ENCODE measurements at regions of chr2 and their contacts with region 1.

Region 1: GRCh38 chr2:171598713-171599319 is 76.5 kb downstream of the CYBRD1 start:
- DNase-seq: no peak
- ATAC-seq: peak; percentile 74

Region 2: DNA sequence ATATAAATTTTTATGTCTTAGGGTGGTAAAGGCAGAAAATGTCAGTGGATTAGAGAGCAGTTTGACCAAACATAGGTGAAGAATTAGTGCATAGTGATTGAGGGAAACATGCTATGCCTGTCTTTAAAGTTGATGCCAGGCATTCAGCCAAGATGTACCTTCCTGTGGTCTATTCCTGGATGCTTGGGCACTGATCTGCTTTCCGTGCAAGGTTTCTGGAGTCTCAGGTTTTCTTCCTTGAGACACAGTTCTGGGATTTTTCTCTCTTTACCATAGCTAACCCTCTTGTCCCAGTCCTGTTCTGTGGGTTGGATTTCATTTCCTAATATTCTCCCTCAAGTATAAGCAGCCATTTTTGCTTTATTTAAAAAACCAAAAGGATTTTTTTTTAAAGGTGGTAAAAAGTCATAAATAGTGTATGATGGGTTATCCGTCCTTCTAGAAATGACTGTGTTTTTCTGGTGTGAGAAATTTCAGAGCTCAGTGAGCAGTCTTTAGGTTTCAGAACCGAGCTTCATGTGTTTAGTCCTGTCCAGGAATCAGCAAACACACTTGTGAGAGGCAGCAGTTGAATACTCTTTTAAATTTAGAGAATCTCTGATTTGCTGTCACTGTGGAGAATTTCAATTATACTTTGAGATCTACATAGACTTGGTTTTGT is 119.5 kb before region 1 on chr2:
- intact Hi-C with region 1: no loop called
- DNase-seq: no peak
- ATAC-seq: no peak

Region 3: DNA sequence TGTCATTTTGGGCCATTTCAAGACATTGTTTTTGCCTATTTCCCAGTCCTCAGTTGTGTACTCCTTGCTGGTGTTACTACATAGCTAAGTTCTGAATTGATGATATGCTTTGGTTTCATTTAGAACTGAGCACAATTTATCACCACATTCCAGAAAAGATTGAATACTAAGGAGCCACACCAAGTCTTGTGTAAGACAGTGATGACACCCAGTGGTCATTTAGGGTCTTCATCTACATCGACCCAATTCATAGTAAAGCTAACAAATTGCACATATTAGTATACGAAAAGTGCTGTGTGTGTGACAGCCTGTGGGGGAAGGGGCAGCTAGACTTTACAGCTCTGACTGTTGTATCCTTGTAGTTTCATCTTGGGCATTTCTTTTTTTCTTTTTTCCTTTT is 514.8 kb after region 1 on chr2:
- intact Hi-C with region 1: loop called (anchors 10 kb)
- DNase-seq: no peak
- ATAC-seq: peak; percentile 21

Measured in left ventricle myocardium superior (tissue), 1 donor.